K562 (cell line): ENCODE measurements at regions of chr2 and their contacts with region 1.

Region 1: GRCh38 chr2:130372055-130372832 is 16.4 kb downstream of the PTPN18 start:
- DNase-seq: peak; percentile 92 to 95 (median 92)
- ATAC-seq: peak; percentile 95
- H3K4me3 ChIP-seq: peak overlapping the region; percentile 74
- H3K27ac ChIP-seq: peak overlapping the region; percentile 81
- H3K4me1 ChIP-seq: peaks cover 35 to 42% of the 10 kb centered on the region in 2 experiments; a peak in 4 of 5 replicates
- H3K27me3 ChIP-seq: no peaks in the 10 kb centered on the region
- CTCF ChIP-seq: peak; percentile 86 to 92 (median 87)
- EP300 ChIP-seq: peak; percentile 6; the same call in 1 of the 2 replicates
- POLR2A ChIP-seq: peak; percentile 77
- RAD21 ChIP-seq: peak; percentile 43 to 61

Region 2: GRCh38 chr2:129876541-129876940 is 495.7 kb before region 1 on chr2:
- CTCF ChIA-PET with region 1: no interaction called
- POLR2A ChIA-PET with region 1: no interaction called
- in situ Hi-C with region 1: no loop called
- intact Hi-C with region 1: no loop called
- DNase-seq: no peak
- ATAC-seq: no peak
- H3K4me3 ChIP-seq: no peak overlapping the region
- H3K27ac ChIP-seq: no peak overlapping the region
- H3K4me1 ChIP-seq: peaks cover 0 to 6% of the 10 kb centered on the region in 2 experiments; a peak in 3 of 5 replicates
- H3K27me3 ChIP-seq: peaks cover 0 to 10% of the 10 kb centered on the region in 2 experiments; a peak in 2 of 5 replicates
- CTCF ChIP-seq: no peak
- EP300 ChIP-seq: no peak
- POLR2A ChIP-seq: no peak
- RAD21 ChIP-seq: no peak

Region 3: DNA sequence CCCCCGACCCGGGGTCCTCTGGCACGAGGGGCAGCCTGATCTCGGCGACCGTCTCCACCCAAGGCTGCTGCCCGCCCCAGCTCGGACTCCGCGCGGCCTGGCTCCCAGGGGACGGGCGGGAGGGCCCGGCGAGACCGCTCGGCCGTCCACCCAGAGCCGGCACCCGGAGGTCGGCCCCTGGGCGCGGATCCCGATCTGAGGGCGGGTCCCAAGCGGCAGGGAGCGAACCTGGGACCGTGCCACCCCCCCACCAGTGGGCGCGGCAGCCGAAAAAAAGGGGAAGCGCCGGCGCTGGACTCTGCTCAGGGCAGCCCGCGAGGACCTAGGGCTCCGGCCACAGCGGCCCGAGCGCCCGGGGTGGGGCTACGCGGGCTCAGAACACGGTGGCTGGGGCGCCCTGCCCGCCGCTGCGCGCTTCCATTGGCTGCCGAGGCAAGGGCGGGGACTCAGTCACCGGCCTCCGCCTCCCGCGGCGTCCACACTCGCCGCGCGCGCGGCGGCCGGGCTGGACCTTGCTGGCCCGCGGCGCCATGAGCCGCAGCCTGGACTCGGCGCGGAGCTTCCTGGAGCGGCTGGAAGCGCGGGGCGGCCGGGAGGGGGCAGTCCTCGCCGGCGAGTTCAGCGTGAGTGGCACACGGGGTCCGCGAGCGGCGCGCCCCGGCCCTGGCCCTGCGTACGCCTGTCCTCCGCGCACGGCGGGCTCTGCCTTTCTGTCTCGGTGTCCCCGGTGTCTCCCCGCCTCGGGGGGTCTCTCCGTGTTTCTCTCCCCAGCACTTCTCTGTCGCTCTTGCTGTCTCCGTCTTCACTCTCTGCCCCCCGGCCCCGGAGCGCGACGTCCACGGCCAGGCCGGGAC is 16.4 kb before region 1 on chr2 and contains the start of gene PTPN18:
- CTCF ChIA-PET with region 1: interaction called, 8 read pairs
- POLR2A ChIA-PET with region 1: interaction called, 18 read pairs
- in situ Hi-C with region 1: no loop called
- intact Hi-C with region 1: no loop called
- DNase-seq: peak; percentile 93 to 95 (median 95)
- ATAC-seq: peak; percentile 96
- H3K4me3 ChIP-seq: peak within 1 kb of the TSS; percentile 78
- H3K27ac ChIP-seq: peak within 1 kb of the TSS; percentile 85
- H3K4me1 ChIP-seq: peaks cover 5 to 41% of the 10 kb centered on the region in 2 experiments; a peak in 4 of 5 replicates
- H3K27me3 ChIP-seq: no peaks in the 10 kb centered on the region
- CTCF ChIP-seq: peak; percentile 31 to 73 (median 63); a peak in 5 of 6 replicates
- EP300 ChIP-seq: no peak
- POLR2A ChIP-seq: peak; percentile 76
- RAD21 ChIP-seq: peak; percentile 61 to 73
- polyA plus RNA-seq, gene PTPN18: 11.6 to 19.3 TPM